Activated T-helper 2 cell treated with anti-CD3 and anti-CD28 coated beads, Interferon-gamma antibody, Interleukin-2, Interleukin-4, amounts not matched to agents 10 μg/mL and 5 μg/mL and 100 μg/mL, durations not matched to agents 14 hours and 24 hours and 36 hours (primary cell): ENCODE measurements at regions of chr22 and their contacts with region 1.

Region 1: GRCh38 chr22:41832553-41833368 is at the start of gene SREBF2:
- DNase-seq: peak; percentile 99
- H3K4me3 Mint-ChIP-seq: peak within 1 kb of the TSS; percentile 99
- H3K27ac Mint-ChIP-seq: peak within 1 kb of the TSS; percentile 97
- H3K4me1 Mint-ChIP-seq: peaks cover 46% of the 10 kb centered on the region
- H3K27me3 Mint-ChIP-seq: no peaks in the 10 kb centered on the region
- total RNA-seq, gene SREBF2: 191 and 202 TPM in 2 replicates

Region 2: GRCh38 chr22:41780746-41781505 is 51.8 kb before region 1 on chr22:
- intact Hi-C with region 1: loop called (anchors 2 kb)
- DNase-seq: peak; percentile 94
- H3K4me3 Mint-ChIP-seq: peak overlapping the region; percentile 89
- H3K27ac Mint-ChIP-seq: peak overlapping the region; percentile 96
- H3K4me1 Mint-ChIP-seq: peaks cover 31% of the 10 kb centered on the region
- H3K27me3 Mint-ChIP-seq: no peaks in the 10 kb centered on the region

Region 3: DNA sequence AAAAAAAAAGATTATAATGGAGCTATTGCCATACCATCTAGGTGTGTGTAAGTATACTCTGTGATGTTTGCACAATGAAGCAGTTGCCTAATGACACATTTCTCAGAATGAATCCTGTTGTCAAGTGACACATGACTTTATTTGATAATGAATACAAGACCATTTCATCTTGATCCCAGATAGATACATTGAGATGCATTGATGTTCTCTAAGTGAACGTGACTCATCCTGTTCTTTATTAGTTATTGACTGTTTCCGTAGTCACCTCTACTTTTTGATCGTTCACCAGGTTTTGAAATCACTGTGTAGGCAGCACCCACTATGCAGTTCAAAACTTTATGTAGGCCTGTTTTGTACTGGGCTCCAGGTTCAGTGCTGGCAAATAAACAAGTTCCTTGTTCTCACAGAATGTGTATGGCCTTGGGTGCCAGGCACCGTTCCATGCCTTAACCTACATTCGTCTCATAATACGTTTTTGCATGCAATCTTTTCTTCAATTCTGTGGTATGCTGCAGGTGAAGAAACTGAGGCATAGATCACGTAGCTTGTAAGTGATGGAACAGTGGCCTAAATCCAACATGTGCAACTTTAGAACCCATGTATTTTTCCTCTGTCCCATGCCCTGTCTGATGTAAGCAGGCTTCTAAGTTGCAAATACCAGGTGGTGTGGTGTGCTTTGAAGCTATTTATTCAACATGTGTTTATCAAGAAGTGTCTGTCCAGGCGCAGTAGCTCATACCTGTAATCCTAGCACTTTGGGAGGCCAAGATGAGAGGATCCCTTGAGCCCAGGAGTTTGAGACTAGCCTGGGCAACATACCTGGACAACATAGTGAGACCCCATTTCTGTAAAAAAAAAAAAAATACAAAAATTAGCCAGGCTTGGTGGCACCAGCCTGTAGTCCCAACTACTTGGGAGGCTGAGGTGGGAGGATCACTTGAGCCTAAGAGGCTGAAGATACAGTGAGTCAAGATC is 10.5 kb after region 1 on chr22:
- intact Hi-C with region 1: loop called (anchors 1 kb)
- DNase-seq: no peak
- H3K4me3 Mint-ChIP-seq: no peak overlapping the region
- H3K27ac Mint-ChIP-seq: peak overlapping the region; percentile 68
- H3K4me1 Mint-ChIP-seq: peaks cover 67% of the 10 kb centered on the region
- H3K27me3 Mint-ChIP-seq: no peaks in the 10 kb centered on the region

Region 4: GRCh38 chr22:42079319-42080251 is 246.8 kb after region 1 on chr22 and contains the start of gene SMDT1:
- intact Hi-C with region 1: loop called (anchors 10 kb)
- DNase-seq: peak; percentile 97
- H3K4me3 Mint-ChIP-seq: peak within 1 kb of the TSS; percentile 97
- H3K27ac Mint-ChIP-seq: peak within 1 kb of the TSS; percentile 93
- H3K4me1 Mint-ChIP-seq: peaks cover 30% of the 10 kb centered on the region
- H3K27me3 Mint-ChIP-seq: no peaks in the 10 kb centered on the region
- total RNA-seq, gene SMDT1: 65.1 and 69.7 TPM in 2 replicates